Cardiac septum (tissue), 1 donor: ENCODE measurements at regions of chr1 and their contacts with region 1.

Region 1: GRCh38 chr1:207885129-207886032 is 25.5 kb downstream of the CD34 start:
- DNase-seq: peak; percentile 93

Region 2: GRCh38 chr1:206631085-206631509 is 1254.3 kb before region 1 on chr1:
- intact Hi-C with region 1: no loop called
- DNase-seq: no peak

Region 3: DNA sequence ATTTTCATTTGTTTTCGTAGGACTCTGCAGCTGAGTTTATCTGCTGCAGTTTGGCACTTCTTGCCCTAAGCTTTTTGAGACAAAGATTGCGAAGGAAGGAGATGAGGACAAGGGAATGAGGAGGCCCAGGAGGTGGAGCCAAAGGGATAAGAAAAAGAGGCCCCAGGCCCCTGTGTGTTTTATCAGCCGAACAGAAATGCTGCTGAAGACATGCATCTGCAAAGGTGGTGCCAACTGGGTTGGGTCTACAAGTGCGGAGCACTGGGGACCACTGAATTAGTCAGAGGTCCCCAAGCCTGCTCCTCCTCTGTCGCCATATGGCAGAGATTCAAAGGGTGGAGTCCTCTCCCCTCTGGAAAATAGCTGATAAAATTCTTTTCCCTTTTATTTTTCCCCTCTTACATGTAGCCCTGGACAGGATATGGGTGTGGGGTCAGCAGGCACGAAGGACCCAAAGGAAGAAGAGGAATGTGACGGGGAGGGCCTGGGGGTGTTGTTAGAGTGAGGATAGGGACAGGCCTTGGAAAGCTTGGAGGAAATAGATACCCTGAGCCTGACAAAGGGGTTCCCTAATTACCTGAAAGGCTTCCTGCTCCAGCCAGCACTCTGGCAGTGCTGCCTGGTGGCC is 22.8 kb after region 1 on chr1:
- intact Hi-C with region 1: loop called (anchors 2 kb)
- DNase-seq: no peak

Region 4: GRCh38 chr1:208065862-208066261 is 180.5 kb after region 1 on chr1:
- intact Hi-C with region 1: no loop called
- DNase-seq: no peak

Region 5: DNA sequence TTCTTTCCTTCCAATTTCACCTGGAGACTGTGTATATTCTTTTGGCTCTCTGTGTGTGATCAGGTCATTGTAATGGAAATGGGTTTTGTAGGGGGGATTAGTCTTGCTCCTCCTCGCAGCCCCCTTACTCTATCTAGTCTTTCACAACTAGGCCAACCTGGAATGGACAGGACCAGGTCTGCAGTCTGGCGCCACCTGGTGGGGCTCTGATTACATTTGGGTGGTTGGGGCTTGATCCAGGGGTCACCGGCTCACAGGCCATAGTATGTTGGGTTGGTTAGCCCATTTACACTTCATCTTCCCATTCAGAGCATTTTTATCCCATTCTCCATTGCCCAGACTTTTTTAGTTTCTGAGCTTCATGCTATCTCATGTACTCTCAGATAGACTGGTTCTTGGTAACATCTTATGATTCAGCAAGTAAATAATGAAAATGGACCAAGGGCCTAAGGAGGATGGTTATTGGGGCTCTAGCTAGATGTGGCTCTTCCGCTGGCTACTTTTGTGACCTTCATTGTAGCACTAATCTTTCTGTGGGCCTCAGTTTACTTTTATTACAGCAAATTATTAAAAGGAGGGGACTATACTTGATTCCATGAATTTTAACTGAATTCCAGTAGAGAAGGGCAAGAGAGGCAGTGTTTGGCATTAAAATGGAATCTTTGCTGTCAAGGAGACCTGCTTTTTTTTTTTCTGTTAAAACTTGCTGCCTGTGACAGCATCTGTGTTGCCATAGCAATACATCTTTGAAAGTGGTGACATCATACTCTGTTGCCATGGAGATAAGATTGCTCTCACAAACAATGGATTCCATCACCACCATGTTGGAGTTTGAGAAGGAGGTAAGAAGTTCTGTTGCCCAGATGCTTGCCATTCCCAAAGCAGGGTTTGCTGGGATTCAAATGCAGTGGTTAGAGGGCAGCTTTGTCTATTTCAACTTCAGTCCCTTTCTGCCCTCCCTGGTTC is 208.7 kb after region 1 on chr1:
- intact Hi-C with region 1: loop called (anchors 5 kb)
- DNase-seq: no peak